Activated naive CD4-positive, alpha-beta T cell treated with anti-CD3 and anti-CD28 coated beads for 36 hours (primary cell): ENCODE measurements at regions of chr14 and their contacts with region 1.

Region 1: DNA sequence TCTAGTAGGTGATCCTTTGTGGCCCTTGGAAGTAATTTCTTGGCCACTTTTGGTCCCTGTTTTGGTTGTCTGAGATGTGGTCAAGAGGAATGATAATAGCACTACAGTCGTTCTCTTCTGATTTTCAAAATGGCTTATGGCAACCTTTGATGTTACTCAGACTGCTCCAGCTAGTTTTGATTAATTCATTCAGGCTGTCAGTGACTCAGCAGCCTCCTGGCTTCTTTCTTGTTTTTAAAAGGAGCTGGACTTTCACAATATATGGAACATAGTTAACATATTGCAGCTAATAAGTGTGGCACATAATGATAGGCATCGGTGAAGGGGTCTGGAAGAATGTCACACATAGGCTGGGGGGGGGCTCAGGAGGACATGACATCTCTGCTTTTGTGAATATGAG is 47.4 kb downstream of the WDR20 start:
- DNase-seq: no peak
- H3K4me3 Mint-ChIP-seq: no peak overlapping the region
- H3K27ac Mint-ChIP-seq: no peak overlapping the region
- H3K4me1 Mint-ChIP-seq: peaks cover 66% of the 10 kb centered on the region
- H3K27me3 Mint-ChIP-seq: no peaks in the 10 kb centered on the region

Region 2: DNA sequence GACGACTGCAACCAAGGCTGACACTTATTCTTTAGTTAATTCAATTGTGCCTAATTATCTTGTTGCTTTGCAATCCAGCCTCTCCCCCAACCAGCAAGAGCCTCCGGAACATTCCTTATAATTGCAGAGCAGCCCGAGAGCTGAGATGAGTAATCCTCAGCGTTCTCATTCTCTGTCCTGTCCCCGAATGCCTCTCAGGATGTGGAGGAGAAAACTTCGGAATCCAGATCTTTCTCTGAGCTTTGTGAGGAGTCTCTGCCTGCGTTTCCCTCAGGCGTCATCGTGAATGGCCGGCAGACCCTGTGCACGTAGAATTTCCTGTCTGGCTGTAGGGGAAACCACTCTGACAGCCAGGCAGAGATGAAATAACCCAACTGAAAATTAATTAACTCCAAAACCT is 786.2 kb before region 1 on chr14:
- CTCF ChIA-PET with region 1: no interaction called
- intact Hi-C with region 1: no loop called
- DNase-seq: no peak
- H3K4me3 Mint-ChIP-seq: no peak overlapping the region
- H3K27ac Mint-ChIP-seq: no peak overlapping the region
- H3K4me1 Mint-ChIP-seq: peaks cover 6% of the 10 kb centered on the region
- H3K27me3 Mint-ChIP-seq: peaks cover 40% of the 10 kb centered on the region

Region 3: GRCh38 chr14:101809671-101810514 is 377.2 kb before region 1 on chr14:
- CTCF ChIA-PET with region 1: no interaction called
- intact Hi-C with region 1: loop called (anchors 5 kb)
- DNase-seq: peak; percentile 94
- H3K4me3 Mint-ChIP-seq: peak overlapping the region; percentile 83
- H3K27ac Mint-ChIP-seq: peak overlapping the region; percentile 95
- H3K4me1 Mint-ChIP-seq: peaks cover 42% of the 10 kb centered on the region
- H3K27me3 Mint-ChIP-seq: no peaks in the 10 kb centered on the region

Region 4: GRCh38 chr14:102086972-102087761 is 99.9 kb before region 1 on chr14 and contains the start of gene HSP90AA1:
- CTCF ChIA-PET with region 1: interaction called, 3 read pairs
- intact Hi-C with region 1: loop called (anchors 5 kb)
- DNase-seq: peak; percentile 92
- H3K4me3 Mint-ChIP-seq: peak within 1 kb of the TSS; percentile 97
- H3K27ac Mint-ChIP-seq: peak within 1 kb of the TSS; percentile 95
- H3K4me1 Mint-ChIP-seq: peaks cover 49% of the 10 kb centered on the region
- H3K27me3 Mint-ChIP-seq: no peaks in the 10 kb centered on the region
- total RNA-seq, gene HSP90AA1: 1,286 to 1,366 TPM

Region 5: GRCh38 chr14:102200690-102201352 is 13.8 kb after region 1 on chr14:
- CTCF ChIA-PET with region 1: no interaction called
- intact Hi-C with region 1: loop called (anchors 1 kb)
- DNase-seq: peak; percentile 20
- H3K4me3 Mint-ChIP-seq: no peak overlapping the region
- H3K27ac Mint-ChIP-seq: peak overlapping the region; percentile 2
- H3K4me1 Mint-ChIP-seq: peaks cover 61% of the 10 kb centered on the region
- H3K27me3 Mint-ChIP-seq: no peaks in the 10 kb centered on the region

Region 6: GRCh38 chr14:102227184-102227964 is 40.3 kb after region 1 on chr14:
- CTCF ChIA-PET with region 1: no interaction called
- intact Hi-C with region 1: no loop called
- DNase-seq: no peak
- H3K4me3 Mint-ChIP-seq: no peak overlapping the region
- H3K27ac Mint-ChIP-seq: no peak overlapping the region
- H3K4me1 Mint-ChIP-seq: no peaks in the 10 kb centered on the region
- H3K27me3 Mint-ChIP-seq: no peaks in the 10 kb centered on the region

Region 7: GRCh38 chr14:102362545-102363181 is 175.6 kb after region 1 on chr14 and contains the starts of genes CINP and TECPR2:
- CTCF ChIA-PET with region 1: no interaction called
- intact Hi-C with region 1: loop called (anchors 5 kb)
- DNase-seq: peak; percentile 99
- H3K4me3 Mint-ChIP-seq: no peak within 1 kb of the TSS
- H3K27ac Mint-ChIP-seq: peak within 1 kb of the TSS; percentile 94
- H3K4me1 Mint-ChIP-seq: peaks cover 30% of the 10 kb centered on the region
- H3K27me3 Mint-ChIP-seq: no peaks in the 10 kb centered on the region
- total RNA-seq, gene CINP: 45.3 to 46.2 TPM
- total RNA-seq, gene TECPR2: 2.3 to 3.6 TPM